ENCODE measurements at regions of chr9 and their contacts with region 1.

Region 1: GRCh38 chr9:27573634-27574590 is 631 bp upstream of the C9orf72 start:
- DNase-seq: peak; percentile 89 to 100 (median 92)
- ATAC-seq: peak; percentile 76
- H3K4me3 ChIP-seq: peak overlapping the region; percentile 86
- H3K4me3 Mint-ChIP-seq: peak overlapping the region; percentile 98
- H3K27ac ChIP-seq: peak overlapping the region; percentile 96 to 99
- H3K27ac Mint-ChIP-seq: peak overlapping the region; percentile 98
- H3K4me1 ChIP-seq: peaks cover 18% of the 10 kb centered on the region
- H3K4me1 Mint-ChIP-seq: peaks cover 36% of the 10 kb centered on the region
- H3K27me3 ChIP-seq: no peaks in the 10 kb centered on the region
- H3K27me3 Mint-ChIP-seq: peaks cover 5% of the 10 kb centered on the region
- CTCF ChIP-seq: no peak

Region 2: DNA sequence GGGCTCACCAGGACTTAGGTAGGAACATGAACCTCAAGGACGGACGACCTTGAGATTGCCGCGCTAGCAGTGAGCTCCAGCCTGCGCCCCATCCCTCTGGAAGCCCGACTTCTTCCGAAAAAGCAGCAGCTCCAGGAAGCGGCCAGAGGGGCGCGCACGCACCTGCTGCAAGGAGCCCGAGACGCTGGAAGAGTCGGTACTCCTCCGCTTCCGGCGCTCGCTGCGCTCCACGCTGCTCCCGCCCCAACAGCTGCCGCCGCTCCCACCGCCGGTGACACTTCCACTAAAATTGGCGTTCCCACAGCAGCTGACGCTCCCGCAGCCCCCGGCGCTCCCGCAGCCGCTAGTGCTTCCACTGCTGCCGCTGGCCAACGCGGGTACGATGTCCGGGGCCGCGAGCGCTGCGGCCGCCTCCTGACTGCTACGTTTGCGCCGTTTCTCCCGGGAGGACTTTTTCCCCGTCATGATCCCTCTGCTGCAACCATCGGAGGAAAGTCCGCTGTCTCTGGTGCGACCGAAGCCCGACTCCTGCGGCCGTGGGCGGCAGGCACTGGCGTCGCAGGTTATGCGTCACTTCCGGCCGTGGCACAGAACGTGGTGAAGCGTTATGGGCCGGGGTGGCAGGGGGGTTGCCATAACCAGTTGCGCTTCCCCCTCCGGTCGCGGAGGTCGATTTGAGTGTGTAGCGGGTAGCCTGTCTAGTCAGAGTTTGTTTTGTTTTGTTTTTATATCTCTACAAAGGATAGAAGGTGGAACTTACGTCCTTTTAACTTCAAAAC is 681.5 kb before region 1 on chr9 and contains the start of gene CAAP1:
- CTCF ChIA-PET with region 1: no interaction called
- POLR2A ChIA-PET with region 1: interaction called, 4 read pairs
- intact Hi-C with region 1: loop called (anchors 2 to 5 kb)
- DNase-seq: peak; percentile 82 to 96 (median 89)
- ATAC-seq: peak; percentile 92
- H3K4me3 ChIP-seq: peak within 1 kb of the TSS; percentile 88
- H3K4me3 Mint-ChIP-seq: peak within 1 kb of the TSS; percentile 100
- H3K27ac ChIP-seq: peak within 1 kb of the TSS; percentile 94 to 95
- H3K27ac Mint-ChIP-seq: peak within 1 kb of the TSS; percentile 98
- H3K4me1 ChIP-seq: peaks cover 23% of the 10 kb centered on the region
- H3K4me1 Mint-ChIP-seq: peaks cover 49% of the 10 kb centered on the region
- H3K27me3 ChIP-seq: no peaks in the 10 kb centered on the region
- H3K27me3 Mint-ChIP-seq: no peaks in the 10 kb centered on the region
- CTCF ChIP-seq: peak; percentile 46
- total RNA-seq, gene CAAP1: 11.4 to 12.8 TPM

Region 3: GRCh38 chr9:26955921-26956859 is 617.7 kb before region 1 on chr9 and contains the start of gene IFT74:
- CTCF ChIA-PET with region 1: no interaction called
- POLR2A ChIA-PET with region 1: interaction called, 6 read pairs
- intact Hi-C with region 1: loop called (anchors 5 to 10 kb)
- DNase-seq: peak; percentile 87 to 98 (median 92)
- ATAC-seq: peak; percentile 99
- H3K4me3 ChIP-seq: peak within 1 kb of the TSS; percentile 71
- H3K4me3 Mint-ChIP-seq: peak within 1 kb of the TSS; percentile 94
- H3K27ac ChIP-seq: peak within 1 kb of the TSS; percentile 48 to 73
- H3K27ac Mint-ChIP-seq: peak within 1 kb of the TSS; percentile 94
- H3K4me1 ChIP-seq: peaks cover 15% of the 10 kb centered on the region
- H3K4me1 Mint-ChIP-seq: peaks cover 33% of the 10 kb centered on the region
- H3K27me3 ChIP-seq: no peaks in the 10 kb centered on the region
- H3K27me3 Mint-ChIP-seq: no peaks in the 10 kb centered on the region
- CTCF ChIP-seq: no peak
- total RNA-seq, gene IFT74: 7.3 to 7.7 TPM

Region 4: GRCh38 chr9:27529316-27530278 is 44.3 kb before region 1 on chr9 and contains the start of gene MOB3B:
- CTCF ChIA-PET with region 1: interaction called, 4 read pairs
- POLR2A ChIA-PET with region 1: interaction called, 3 read pairs
- intact Hi-C with region 1: loop called in 1 of 2 experiments (anchors 5 kb)
- DNase-seq: peak; percentile 56 to 84 (median 68)
- ATAC-seq: peak; percentile 85
- H3K4me3 ChIP-seq: peak within 1 kb of the TSS; percentile 64
- H3K4me3 Mint-ChIP-seq: peak within 1 kb of the TSS; percentile 95
- H3K27ac ChIP-seq: no peak within 1 kb of the TSS
- H3K27ac Mint-ChIP-seq: no peak within 1 kb of the TSS
- H3K4me1 ChIP-seq: peaks cover 16% of the 10 kb centered on the region
- H3K4me1 Mint-ChIP-seq: peaks cover 15% of the 10 kb centered on the region
- H3K27me3 ChIP-seq: peaks cover 0 to 7% of the 10 kb centered on the region in 2 experiments
- H3K27me3 Mint-ChIP-seq: peaks cover 3% of the 10 kb centered on the region
- CTCF ChIP-seq: peak; percentile 90
- total RNA-seq, gene MOB3B: 0.25 to 0.30 TPM

Region 5: GRCh38 chr9:27561685-27562084 is 12.2 kb before region 1 on chr9:
- CTCF ChIA-PET with region 1: interaction called, 5 read pairs
- POLR2A ChIA-PET with region 1: interaction called, 18 read pairs
- intact Hi-C with region 1: no loop called
- DNase-seq: no peak
- ATAC-seq: no peak
- H3K4me3 ChIP-seq: no peak overlapping the region
- H3K4me3 Mint-ChIP-seq: no peak overlapping the region
- H3K27ac ChIP-seq: no peak overlapping the region
- H3K27ac Mint-ChIP-seq: no peak overlapping the region
- H3K4me1 ChIP-seq: no peaks in the 10 kb centered on the region
- H3K4me1 Mint-ChIP-seq: peaks cover 23% of the 10 kb centered on the region
- H3K27me3 ChIP-seq: no peaks in the 10 kb centered on the region
- H3K27me3 Mint-ChIP-seq: no peaks in the 10 kb centered on the region
- CTCF ChIP-seq: no peak

Region 6: GRCh38 chr9:27590651-27591050 is 16.7 kb after region 1 on chr9:
- CTCF ChIA-PET with region 1: no interaction called
- POLR2A ChIA-PET with region 1: no interaction called
- intact Hi-C with region 1: no loop called
- DNase-seq: peak in 1 of 14 experiments; percentile 29
- ATAC-seq: no peak
- H3K4me3 ChIP-seq: no peak overlapping the region
- H3K4me3 Mint-ChIP-seq: no peak overlapping the region
- H3K27ac ChIP-seq: no peak overlapping the region
- H3K27ac Mint-ChIP-seq: no peak overlapping the region
- H3K4me1 ChIP-seq: no peaks in the 10 kb centered on the region
- H3K4me1 Mint-ChIP-seq: no peaks in the 10 kb centered on the region
- H3K27me3 ChIP-seq: peaks cover 7 to 35% of the 10 kb centered on the region in 2 experiments
- H3K27me3 Mint-ChIP-seq: peaks cover 42% of the 10 kb centered on the region
- CTCF ChIP-seq: no peak

Region 7: GRCh38 chr9:27614551-27614950 is 40.6 kb after region 1 on chr9:
- CTCF ChIA-PET with region 1: no interaction called
- POLR2A ChIA-PET with region 1: no interaction called
- intact Hi-C with region 1: no loop called
- DNase-seq: no peak
- ATAC-seq: no peak
- H3K4me3 ChIP-seq: no peak overlapping the region
- H3K4me3 Mint-ChIP-seq: no peak overlapping the region
- H3K27ac ChIP-seq: no peak overlapping the region
- H3K27ac Mint-ChIP-seq: no peak overlapping the region
- H3K4me1 ChIP-seq: no peaks in the 10 kb centered on the region
- H3K4me1 Mint-ChIP-seq: no peaks in the 10 kb centered on the region
- H3K27me3 ChIP-seq: peaks cover 10 to 12% of the 10 kb centered on the region in 2 experiments
- H3K27me3 Mint-ChIP-seq: peaks cover 29% of the 10 kb centered on the region
- CTCF ChIP-seq: no peak